Activated CD4-positive, alpha-beta T cell treated with anti-CD3 and anti-CD28 coated beads for 36 hours (primary cell): ENCODE measurements at regions of chr15 and their contacts with region 1.

Region 1: GRCh38 chr15:41827880-41828806 is at the start of gene JMJD7:
- DNase-seq: peak; percentile 99
- ATAC-seq: peak; percentile 96
- H3K4me3 Mint-ChIP-seq: peak within 1 kb of the TSS; percentile 80
- H3K27ac Mint-ChIP-seq: peak within 1 kb of the TSS; percentile 69
- H3K4me1 Mint-ChIP-seq: peaks cover 41% of the 10 kb centered on the region
- H3K27me3 Mint-ChIP-seq: no peaks in the 10 kb centered on the region
- total RNA-seq, gene JMJD7: 17.1 to 17.6 TPM

Region 2: GRCh38 chr15:41416742-41417406 is 411.3 kb before region 1 on chr15 and contains the start of gene RTF1:
- CTCF ChIA-PET with region 1: no interaction called
- POLR2A ChIA-PET with region 1: no interaction called
- intact Hi-C with region 1: loop called in 1 of 2 experiments (anchors 5 kb)
- DNase-seq: peak; percentile 98
- ATAC-seq: peak; percentile 94
- H3K4me3 Mint-ChIP-seq: peak within 1 kb of the TSS; percentile 88
- H3K27ac Mint-ChIP-seq: peak within 1 kb of the TSS; percentile 92
- H3K4me1 Mint-ChIP-seq: peaks cover 38% of the 10 kb centered on the region
- H3K27me3 Mint-ChIP-seq: no peaks in the 10 kb centered on the region
- total RNA-seq, gene RTF1: 29.4 to 32.3 TPM

Region 3: DNA sequence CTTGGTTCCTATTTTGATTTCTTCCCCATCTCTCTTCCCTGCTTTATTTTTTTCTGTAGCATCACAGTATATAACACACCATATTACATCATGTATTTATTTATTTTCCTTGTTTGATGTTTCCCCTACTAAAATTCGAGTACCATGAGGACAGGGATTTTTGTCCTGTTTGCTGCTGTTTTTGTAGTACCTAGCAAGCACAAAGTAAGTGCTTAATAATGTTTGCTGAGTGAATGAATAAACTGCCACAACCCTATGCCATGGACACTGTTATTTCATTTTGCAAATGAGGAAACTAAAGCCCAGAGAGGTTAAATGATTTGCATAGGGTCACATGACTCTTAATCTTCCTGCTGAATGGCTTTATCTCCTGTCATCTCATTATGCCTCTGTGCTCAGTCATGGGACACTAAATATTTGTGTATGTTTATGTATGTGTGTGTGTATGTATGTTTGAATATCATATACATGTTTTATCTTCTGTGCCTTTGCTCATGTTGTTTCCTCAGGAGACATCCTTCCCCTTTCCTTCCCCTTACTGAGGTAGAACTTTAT is 194.0 kb before region 1 on chr15:
- CTCF ChIA-PET with region 1: no interaction called
- POLR2A ChIA-PET with region 1: no interaction called
- intact Hi-C with region 1: no loop called
- DNase-seq: no peak
- ATAC-seq: no peak
- H3K4me3 Mint-ChIP-seq: no peak overlapping the region
- H3K27ac Mint-ChIP-seq: no peak overlapping the region
- H3K4me1 Mint-ChIP-seq: peaks cover 13% of the 10 kb centered on the region
- H3K27me3 Mint-ChIP-seq: no peaks in the 10 kb centered on the region

Region 4: DNA sequence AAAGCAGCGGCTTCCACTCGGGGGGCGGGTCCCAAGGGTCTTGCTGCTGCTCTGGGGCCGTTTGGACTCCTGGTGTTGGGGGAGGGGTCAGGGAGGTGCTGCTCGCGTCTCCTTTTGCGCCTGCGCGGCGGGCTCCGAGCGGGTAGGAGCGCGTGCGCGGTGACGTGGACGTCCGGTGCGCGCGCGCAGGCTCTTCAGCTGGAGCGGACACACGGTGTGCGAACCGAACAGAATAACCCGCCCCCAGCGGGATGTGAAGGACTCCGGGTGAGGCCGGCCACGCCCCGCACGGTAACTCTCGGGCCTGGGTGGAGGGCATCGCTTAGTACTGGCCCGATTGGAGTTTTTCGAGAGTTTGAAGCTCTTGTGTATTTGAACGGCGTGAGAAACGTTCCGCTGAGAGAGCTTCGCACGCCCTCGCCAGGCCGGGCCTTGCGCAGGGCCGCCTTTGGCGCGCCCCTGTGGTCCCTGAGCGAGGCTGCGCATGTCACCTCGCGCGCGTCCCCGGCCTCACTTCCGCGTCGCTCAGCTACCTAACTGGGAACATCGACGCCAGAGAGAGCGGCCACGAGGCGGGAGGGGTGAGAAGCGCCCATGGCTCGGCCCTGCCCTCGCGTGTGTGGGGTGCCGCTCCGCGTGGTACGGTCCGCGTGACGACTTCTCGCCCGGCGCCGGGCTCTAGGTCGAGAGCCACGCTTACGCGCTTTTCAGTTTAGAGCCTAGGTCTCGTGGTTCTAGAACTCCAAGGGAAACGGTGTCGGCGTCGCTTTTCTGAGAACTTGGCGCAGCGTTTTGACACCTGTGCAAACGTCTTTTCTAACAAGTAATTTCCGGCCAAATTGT is 167.7 kb before region 1 on chr15 and contains the start of gene MGA:
- CTCF ChIA-PET with region 1: no interaction called
- POLR2A ChIA-PET with region 1: no interaction called
- intact Hi-C with region 1: loop called (anchors 1 to 2 kb)
- DNase-seq: peak; percentile 94
- ATAC-seq: peak; percentile 89
- H3K4me3 Mint-ChIP-seq: peak within 1 kb of the TSS; percentile 92
- H3K27ac Mint-ChIP-seq: peak within 1 kb of the TSS; percentile 95
- H3K4me1 Mint-ChIP-seq: peaks cover 42% of the 10 kb centered on the region
- H3K27me3 Mint-ChIP-seq: peaks cover 7% of the 10 kb centered on the region
- total RNA-seq, gene MGA: 33.7 to 39.3 TPM

Region 5: GRCh38 chr15:41904541-41905005 is 76.4 kb after region 1 on chr15:
- CTCF ChIA-PET with region 1: interaction called, 3 read pairs
- POLR2A ChIA-PET with region 1: no interaction called
- intact Hi-C with region 1: loop called (anchors 1 to 5 kb)
- DNase-seq: peak; percentile 81
- ATAC-seq: peak; percentile 92
- H3K4me3 Mint-ChIP-seq: no peak overlapping the region
- H3K27ac Mint-ChIP-seq: peak overlapping the region; percentile 4
- H3K4me1 Mint-ChIP-seq: peaks cover 5% of the 10 kb centered on the region
- H3K27me3 Mint-ChIP-seq: no peaks in the 10 kb centered on the region

Region 6: GRCh38 chr15:41972253-41973242 is 144.4 kb after region 1 on chr15 and contains the start of gene EHD4:
- CTCF ChIA-PET with region 1: interaction called, 4 read pairs
- POLR2A ChIA-PET with region 1: no interaction called
- intact Hi-C with region 1: loop called (anchors 1 to 5 kb)
- DNase-seq: peak; percentile 98
- ATAC-seq: peak; percentile 80
- H3K4me3 Mint-ChIP-seq: peak within 1 kb of the TSS; percentile 86
- H3K27ac Mint-ChIP-seq: peak within 1 kb of the TSS; percentile 94
- H3K4me1 Mint-ChIP-seq: peaks cover 53% of the 10 kb centered on the region
- H3K27me3 Mint-ChIP-seq: peaks cover 8% of the 10 kb centered on the region
- total RNA-seq, gene EHD4: 34.7 to 35.7 TPM